Activated CD4-positive, alpha-beta memory T cell treated with anti-CD3 and anti-CD28 coated beads for 36 hours (primary cell): ENCODE measurements at regions of chr15 and their contacts with region 1.

Region 1: GRCh38 chr15:40405501-40406381 is at the start of gene IVD:
- DNase-seq: peak; percentile 95
- H3K4me3 Mint-ChIP-seq: peak within 1 kb of the TSS; percentile 69
- H3K27ac Mint-ChIP-seq: peak within 1 kb of the TSS; percentile 65
- H3K4me1 Mint-ChIP-seq: peaks cover 49% of the 10 kb centered on the region
- H3K27me3 Mint-ChIP-seq: no peaks in the 10 kb centered on the region
- total RNA-seq, gene IVD: 37.3 to 38.7 TPM

Region 2: GRCh38 chr15:40146037-40146436 is 259.7 kb before region 1 on chr15:
- CTCF ChIA-PET with region 1: no interaction called
- POLR2A ChIA-PET with region 1: no interaction called
- intact Hi-C with region 1: no loop called
- DNase-seq: no peak
- H3K4me3 Mint-ChIP-seq: no peak overlapping the region
- H3K27ac Mint-ChIP-seq: no peak overlapping the region
- H3K4me1 Mint-ChIP-seq: no peaks in the 10 kb centered on the region
- H3K27me3 Mint-ChIP-seq: no peaks in the 10 kb centered on the region

Region 3: DNA sequence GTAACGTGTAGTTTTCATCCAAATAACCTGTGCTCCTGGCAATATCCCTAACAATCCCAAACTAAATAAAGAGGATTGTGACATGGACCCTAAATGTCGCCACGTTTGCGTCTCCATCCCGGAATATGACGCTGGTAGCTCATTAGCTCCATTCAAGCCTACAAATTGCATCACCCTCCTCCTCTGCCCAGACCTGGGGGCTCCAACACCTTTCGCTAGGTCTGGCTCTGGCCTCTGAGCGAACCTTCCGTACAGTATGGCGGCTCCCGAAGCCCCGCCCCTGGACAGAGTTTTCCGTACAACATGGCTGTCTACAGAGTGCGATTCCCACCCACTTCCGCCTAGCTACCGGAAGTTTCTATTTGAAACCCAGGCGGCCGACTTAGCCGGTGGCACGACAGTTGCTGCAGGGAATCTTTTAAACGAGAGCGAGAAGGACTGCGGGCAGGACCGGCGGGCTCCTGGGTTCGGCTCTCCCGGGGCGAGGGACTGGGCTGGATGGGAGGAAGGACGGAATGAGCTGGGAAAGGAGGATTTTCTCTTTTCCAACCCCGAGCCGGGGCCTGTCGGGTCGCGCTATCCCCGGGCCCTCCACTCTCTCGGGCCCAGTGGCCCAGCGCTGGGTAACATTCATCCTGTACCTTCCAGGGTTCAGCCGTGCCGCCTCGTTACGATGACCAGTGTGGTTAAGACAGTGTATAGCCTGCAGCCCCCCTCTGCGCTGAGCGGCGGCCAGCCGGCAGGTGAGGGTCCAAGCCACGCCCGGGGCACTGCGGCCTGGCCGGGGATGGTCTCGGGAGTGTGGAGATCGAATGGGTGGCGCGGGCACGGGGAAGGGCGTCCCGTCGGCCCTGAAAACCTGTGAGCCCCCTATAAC is 22.9 kb before region 1 on chr15 and contains the start of gene KNSTRN:
- CTCF ChIA-PET with region 1: no interaction called
- POLR2A ChIA-PET with region 1: interaction called, 4 read pairs
- intact Hi-C with region 1: loop called (anchors 1 kb)
- DNase-seq: peak; percentile 95
- H3K4me3 Mint-ChIP-seq: peak within 1 kb of the TSS; percentile 87
- H3K27ac Mint-ChIP-seq: peak within 1 kb of the TSS; percentile 34
- H3K4me1 Mint-ChIP-seq: peaks cover 14% of the 10 kb centered on the region
- H3K27me3 Mint-ChIP-seq: no peaks in the 10 kb centered on the region
- total RNA-seq, gene KNSTRN: 59.8 to 61.5 TPM

Region 4: GRCh38 chr15:40421246-40422157 is 15.8 kb after region 1 on chr15:
- CTCF ChIA-PET with region 1: interaction called, 13 read pairs
- POLR2A ChIA-PET with region 1: interaction called, 4 read pairs
- intact Hi-C with region 1: no loop called
- DNase-seq: peak; percentile 87
- H3K4me3 Mint-ChIP-seq: no peak overlapping the region
- H3K27ac Mint-ChIP-seq: no peak overlapping the region
- H3K4me1 Mint-ChIP-seq: no peaks in the 10 kb centered on the region
- H3K27me3 Mint-ChIP-seq: no peaks in the 10 kb centered on the region